Activated CD8-positive, alpha-beta memory T cell treated with anti-CD3 and anti-CD28 coated beads, Interleukin-2, amount 10 ng/mL, durations not matched to agents 7 days and 5 days (primary cell): ENCODE measurements at regions of chr10 and their contacts with region 1.

Region 1: DNA sequence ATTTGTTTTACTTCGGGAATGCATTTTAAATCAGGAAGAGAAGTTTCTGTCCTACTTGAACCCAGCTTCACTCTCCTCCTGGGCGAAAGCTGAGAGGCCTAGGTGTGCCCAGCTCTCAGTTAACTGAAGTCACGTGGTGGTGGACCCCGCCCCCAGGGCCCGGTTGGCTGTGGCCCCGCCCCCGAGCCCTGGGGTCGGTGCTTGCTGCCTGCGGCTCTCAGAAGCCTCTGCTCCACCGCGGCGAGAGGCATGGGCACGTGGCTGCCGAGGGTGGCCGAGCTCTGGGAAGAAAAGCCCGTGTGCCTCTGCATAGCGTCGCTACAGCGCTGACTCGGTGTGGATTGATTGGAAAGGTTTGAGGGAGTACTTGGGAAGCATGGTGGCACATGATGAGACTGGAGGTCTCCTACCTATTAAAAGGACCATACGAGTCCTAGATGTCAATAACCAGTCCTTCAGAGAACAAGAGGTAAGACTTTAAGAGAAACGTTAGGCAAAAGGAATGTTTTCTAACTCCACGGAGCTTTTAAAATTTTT is 34.1 kb downstream of the NET1 start:
- DNase-seq: peak; percentile 82
- ATAC-seq: peak; percentile 46
- H3K4me3 Mint-ChIP-seq: peak overlapping the region; percentile 80
- H3K27ac Mint-ChIP-seq: peak overlapping the region; percentile 77
- H3K4me1 Mint-ChIP-seq: peaks cover 69% of the 10 kb centered on the region
- H3K27me3 Mint-ChIP-seq: no peaks in the 10 kb centered on the region

Region 2: DNA sequence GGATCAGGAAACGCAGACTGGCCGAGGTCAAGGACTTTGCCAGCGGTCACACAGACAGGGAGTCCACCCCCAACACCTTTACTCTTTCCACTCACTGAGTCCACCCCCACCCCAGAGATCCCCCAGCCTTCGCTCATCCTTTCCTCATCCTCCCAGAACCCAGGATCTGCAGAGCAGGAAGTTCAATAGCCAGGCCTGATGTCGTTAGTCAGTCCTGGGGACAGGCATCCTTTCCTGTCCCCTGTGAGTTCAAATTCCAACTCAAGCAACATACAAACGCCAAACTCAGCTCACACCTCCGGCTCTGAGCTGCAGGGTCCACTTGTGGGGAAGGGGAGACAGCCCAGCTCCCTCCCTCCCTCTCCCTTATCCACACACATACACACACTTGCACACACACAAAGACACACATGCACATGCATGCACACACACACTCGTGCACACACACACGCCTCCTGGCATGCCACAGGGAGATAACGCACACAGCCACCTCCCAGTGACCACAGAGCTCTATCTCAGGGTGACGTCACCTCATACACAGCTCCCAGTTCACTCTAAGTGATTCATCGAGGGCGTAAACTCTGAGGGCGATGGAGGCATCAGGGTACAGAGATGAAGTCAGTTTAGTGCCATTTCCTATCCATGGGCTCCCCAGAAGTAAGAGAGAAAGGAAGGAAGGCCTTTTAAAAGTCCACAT is 102.2 kb after region 1 on chr10:
- CTCF ChIA-PET with region 1: interaction called, 18 read pairs
- DNase-seq: peak; percentile 87
- ATAC-seq: peak; percentile 94
- H3K4me3 Mint-ChIP-seq: no peak overlapping the region
- H3K27ac Mint-ChIP-seq: no peak overlapping the region
- H3K4me1 Mint-ChIP-seq: peaks cover 33% of the 10 kb centered on the region
- H3K27me3 Mint-ChIP-seq: peaks cover 26% of the 10 kb centered on the region

Region 3: GRCh38 chr10:5614155-5614721 is 167.8 kb after region 1 on chr10:
- CTCF ChIA-PET with region 1: no interaction called
- DNase-seq: no peak
- ATAC-seq: no peak
- H3K4me3 Mint-ChIP-seq: no peak overlapping the region
- H3K27ac Mint-ChIP-seq: no peak overlapping the region
- H3K4me1 Mint-ChIP-seq: no peaks in the 10 kb centered on the region
- H3K27me3 Mint-ChIP-seq: peaks cover 9% of the 10 kb centered on the region

Region 4: DNA sequence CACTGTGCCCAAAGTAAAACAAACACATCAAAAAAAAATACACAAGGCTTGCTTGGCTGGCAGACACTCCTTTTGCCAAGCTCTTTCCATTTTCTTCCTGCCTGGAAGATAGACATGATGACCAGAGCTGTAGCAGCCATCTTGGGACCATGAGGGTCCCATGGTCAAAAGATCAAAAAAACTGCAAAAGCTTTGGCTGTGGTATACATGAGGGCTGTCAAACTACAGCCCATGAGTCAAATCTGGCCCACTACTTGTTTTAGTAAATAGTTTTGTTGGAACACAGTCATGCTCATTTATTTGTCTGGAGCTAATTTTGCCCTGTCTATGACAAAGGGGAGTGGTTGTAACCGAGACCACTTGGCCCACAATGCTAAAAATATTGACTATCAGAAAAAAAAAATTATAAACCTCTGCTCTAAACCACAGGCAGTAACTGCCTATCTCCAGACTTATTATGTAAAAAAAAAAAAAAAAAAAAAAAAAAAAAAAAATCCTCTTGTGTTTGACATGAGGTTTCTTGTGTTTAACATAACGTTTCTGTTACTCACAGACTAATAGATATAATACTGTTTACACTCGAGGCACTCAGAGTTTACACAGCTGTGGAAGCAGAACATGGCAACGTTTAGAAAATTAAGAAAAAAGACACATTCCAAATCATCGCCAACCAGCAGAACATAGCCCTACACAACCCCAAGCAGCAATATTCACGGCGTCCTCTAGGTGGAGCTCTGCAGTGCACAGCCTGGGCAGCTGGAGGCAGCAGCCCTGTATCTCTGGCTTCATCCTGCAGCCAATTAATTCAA is 183.0 kb after region 1 on chr10:
- CTCF ChIA-PET with region 1: interaction called, 189 read pairs
- DNase-seq: peak; percentile 91
- ATAC-seq: peak; percentile 74
- H3K4me3 Mint-ChIP-seq: peak overlapping the region; percentile 32
- H3K27ac Mint-ChIP-seq: peak overlapping the region; percentile 69
- H3K4me1 Mint-ChIP-seq: peaks cover 38% of the 10 kb centered on the region
- H3K27me3 Mint-ChIP-seq: peaks cover 25% of the 10 kb centered on the region